ENCODE measurements at regions of chr6 and their contacts with region 1.

Region 1: DNA sequence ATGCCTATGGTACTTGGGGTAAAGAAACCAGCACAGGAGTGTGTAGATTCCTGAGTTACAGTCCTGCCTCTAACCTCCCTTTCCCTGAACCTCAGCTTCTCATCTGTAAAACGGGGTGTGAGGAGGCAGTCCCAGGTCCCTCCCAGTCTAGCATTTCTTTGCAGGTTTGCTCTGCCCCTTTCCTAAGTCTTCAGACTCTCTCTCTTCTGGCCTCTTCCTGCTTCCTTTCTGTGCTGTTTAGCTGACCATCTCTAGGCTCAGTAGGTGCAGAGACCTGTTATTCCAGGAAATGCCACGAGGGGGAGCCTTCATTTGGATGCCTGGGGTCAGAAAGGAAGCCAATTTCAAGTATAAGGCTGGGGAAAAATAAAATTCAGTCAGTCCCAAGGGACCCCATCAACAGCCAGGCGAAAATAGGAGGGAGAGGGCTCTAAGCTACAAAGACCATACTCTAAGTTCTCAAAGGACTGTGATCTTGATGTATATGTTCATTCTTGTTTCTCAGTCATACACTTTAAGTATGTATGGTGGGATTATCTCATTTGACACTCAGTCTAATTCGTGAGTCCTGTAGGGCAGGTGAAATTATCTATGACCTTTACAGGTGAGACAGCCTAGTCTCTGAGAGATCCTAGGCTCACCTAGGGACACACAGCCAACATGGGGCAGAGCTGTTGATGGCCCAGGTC is 89.1 kb downstream of the NCR2 start:
- DNase-seq: peak; percentile 94
- H3K4me3 Mint-ChIP-seq: no peak overlapping the region
- H3K27ac Mint-ChIP-seq: no peak overlapping the region
- H3K4me1 Mint-ChIP-seq: peaks cover 8% of the 10 kb centered on the region
- H3K27me3 Mint-ChIP-seq: peaks cover 28% of the 10 kb centered on the region

Region 2: DNA sequence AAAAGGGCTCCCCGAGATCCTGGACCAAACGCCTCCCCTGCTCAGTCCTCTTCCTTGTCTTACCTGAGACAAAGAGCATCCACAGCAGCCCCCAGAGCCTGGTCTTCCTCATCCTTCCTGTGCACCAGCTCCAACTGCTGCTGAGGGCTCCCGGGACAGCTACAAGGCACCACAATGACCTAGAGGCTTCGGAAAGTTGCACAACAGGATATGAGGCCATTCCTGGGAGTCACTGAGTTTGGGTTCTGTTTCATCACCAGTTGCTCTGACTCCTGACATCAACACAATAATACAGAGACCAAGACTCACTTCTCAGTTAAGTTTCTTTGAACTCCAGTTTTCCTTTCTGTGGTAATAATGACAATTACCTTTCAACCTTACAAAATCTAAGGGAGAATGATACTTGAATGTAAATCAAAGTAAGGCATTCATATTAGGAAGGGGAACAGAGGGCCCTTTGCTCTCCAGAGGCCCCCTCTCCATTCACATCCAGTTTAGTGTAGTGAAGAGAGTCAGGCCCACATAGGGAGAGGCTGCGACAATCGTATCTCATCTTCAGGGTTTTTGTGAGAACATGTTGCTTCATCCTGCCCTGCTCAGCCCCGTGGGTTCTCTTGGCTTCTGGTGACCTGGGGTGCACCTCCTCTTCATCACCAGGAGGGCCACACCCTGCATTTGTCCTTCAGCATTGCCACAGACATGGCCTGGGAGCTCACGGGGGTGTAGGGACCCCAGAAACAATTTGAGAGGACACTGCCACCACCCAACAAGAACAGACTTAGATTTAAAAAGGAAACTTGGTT is 137.8 kb before region 1 on chr6 and contains the start of gene TREM1:
- intact Hi-C with region 1: no loop called
- DNase-seq: no peak
- H3K4me3 Mint-ChIP-seq: no peak within 1 kb of the TSS
- H3K27ac Mint-ChIP-seq: no peak within 1 kb of the TSS
- H3K4me1 Mint-ChIP-seq: peaks cover 3% of the 10 kb centered on the region
- H3K27me3 Mint-ChIP-seq: peaks cover 5% of the 10 kb centered on the region
- total RNA-seq, gene TREM1: 0.43 TPM in 1 of 2 replicates, not detected in the other

Region 3: GRCh38 chr6:41352396-41352795 is 72.1 kb before region 1 on chr6:
- intact Hi-C with region 1: no loop called
- DNase-seq: no peak
- H3K4me3 Mint-ChIP-seq: no peak overlapping the region
- H3K27ac Mint-ChIP-seq: no peak overlapping the region
- H3K4me1 Mint-ChIP-seq: no peaks in the 10 kb centered on the region
- H3K27me3 Mint-ChIP-seq: peaks cover 34% of the 10 kb centered on the region

Region 4: GRCh38 chr6:41367700-41368099 is 56.8 kb before region 1 on chr6:
- intact Hi-C with region 1: loop called (anchors 5 kb)
- DNase-seq: no peak
- H3K4me3 Mint-ChIP-seq: no peak overlapping the region
- H3K27ac Mint-ChIP-seq: no peak overlapping the region
- H3K4me1 Mint-ChIP-seq: peaks cover 16% of the 10 kb centered on the region
- H3K27me3 Mint-ChIP-seq: peaks cover 72% of the 10 kb centered on the region

Region 5: DNA sequence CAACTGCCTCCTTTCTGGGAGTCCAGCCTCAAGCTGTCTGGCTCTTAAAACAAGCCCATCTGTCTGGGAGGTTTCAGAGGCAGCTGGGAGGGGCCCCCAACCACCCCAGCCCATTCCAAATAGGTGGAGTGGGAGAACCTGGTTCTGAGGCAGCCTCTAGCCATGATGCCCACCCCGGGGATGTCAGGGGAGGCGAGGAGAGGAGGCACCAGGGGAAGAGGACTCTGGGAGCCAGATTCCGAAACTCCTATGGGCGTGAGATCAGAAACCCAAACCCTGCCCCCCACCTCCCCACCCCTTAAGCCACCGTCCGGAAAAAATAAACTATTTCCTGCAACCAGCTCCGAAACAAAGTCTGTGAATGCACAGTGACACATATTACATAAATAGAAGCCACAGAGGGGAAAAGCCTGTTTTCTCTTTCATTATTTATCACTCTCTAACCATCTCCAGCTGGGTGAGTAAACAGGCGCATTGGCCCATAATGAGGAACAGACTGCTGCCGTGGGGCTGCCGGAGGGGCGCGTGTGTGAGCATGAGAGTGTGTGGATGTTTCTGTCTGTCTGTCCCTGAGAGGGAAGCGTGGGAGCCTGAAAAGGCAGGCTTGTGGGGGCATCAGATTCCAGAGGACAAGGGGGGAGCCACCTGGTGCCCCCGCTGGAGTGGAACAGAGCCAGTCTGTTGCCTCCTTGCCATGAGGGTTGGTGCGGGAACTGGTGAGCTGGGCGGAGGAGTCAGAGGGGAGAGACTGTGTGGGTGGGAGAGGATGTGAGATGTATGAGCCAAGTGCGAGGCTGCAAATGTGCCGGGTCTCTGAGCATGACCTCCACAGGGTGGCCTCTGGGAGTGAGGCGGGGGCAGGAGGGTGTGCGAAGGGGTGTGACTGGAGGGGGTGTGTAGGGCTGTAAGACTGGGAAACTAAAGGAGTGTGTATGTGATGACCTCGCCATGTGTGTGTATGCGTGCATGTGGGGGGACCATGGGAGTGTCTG is 107.4 kb after region 1 on chr6:
- intact Hi-C with region 1: loop called (anchors 1 kb)
- DNase-seq: peak; percentile 87
- H3K4me3 Mint-ChIP-seq: peak overlapping the region; percentile 86
- H3K27ac Mint-ChIP-seq: peak overlapping the region; percentile 96
- H3K4me1 Mint-ChIP-seq: peaks cover 23% of the 10 kb centered on the region
- H3K27me3 Mint-ChIP-seq: peaks cover 65% of the 10 kb centered on the region

Region 6: DNA sequence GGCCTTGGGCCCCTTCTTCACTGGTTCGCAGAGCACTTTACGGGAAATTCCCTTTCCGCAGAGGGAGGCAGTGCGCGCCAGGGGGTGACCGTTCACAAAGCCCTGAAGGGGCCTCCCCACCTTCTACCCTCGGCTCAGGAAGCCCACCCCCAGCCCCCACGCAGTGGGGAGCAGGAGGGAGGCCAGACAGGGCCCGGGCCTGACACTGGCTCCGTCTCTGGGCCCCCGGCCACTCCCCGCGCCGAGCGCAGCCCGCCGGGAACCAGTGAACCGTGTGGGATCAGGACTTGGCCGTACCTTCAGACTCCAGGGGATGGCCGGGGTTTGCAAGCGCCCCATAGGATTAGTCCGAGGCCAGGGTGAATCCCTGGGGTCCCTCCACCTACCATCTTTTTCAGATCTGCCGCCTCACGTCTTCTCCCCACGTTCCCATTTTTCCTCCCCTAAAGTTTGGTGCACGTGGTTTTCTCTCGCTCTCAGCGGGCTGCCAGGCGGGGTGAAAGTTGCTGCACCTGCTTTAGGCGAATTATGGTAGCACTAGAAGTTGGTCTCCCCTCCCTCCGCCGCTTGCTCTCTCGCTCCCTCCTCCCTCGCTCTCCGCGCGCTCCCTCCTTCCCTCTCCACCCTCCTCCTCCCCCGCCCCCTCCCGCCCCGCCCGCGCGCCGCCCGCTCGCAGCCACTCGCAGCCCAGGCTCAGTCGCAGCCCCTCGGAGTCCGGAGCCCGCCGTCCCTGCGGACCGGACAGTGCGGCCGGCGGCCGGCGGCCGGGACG is 121.4 kb after region 1 on chr6 and contains the start of gene FOXP4:
- intact Hi-C with region 1: loop called (anchors 5 kb)
- DNase-seq: peak; percentile 94
- H3K4me3 Mint-ChIP-seq: peak within 1 kb of the TSS; percentile 91
- H3K27ac Mint-ChIP-seq: peak within 1 kb of the TSS; percentile 79
- H3K4me1 Mint-ChIP-seq: peaks cover 20% of the 10 kb centered on the region
- H3K27me3 Mint-ChIP-seq: peaks cover 60% of the 10 kb centered on the region
- total RNA-seq, gene FOXP4: 16.9 and 17.6 TPM in 2 replicates

Region 7: GRCh38 chr6:41591859-41592502 is 167.5 kb after region 1 on chr6:
- intact Hi-C with region 1: loop called (anchors 1 kb)
- DNase-seq: peak; percentile 93
- H3K4me3 Mint-ChIP-seq: no peak overlapping the region
- H3K27ac Mint-ChIP-seq: no peak overlapping the region
- H3K4me1 Mint-ChIP-seq: peaks cover 2% of the 10 kb centered on the region
- H3K27me3 Mint-ChIP-seq: no peaks in the 10 kb centered on the region

Region 8: DNA sequence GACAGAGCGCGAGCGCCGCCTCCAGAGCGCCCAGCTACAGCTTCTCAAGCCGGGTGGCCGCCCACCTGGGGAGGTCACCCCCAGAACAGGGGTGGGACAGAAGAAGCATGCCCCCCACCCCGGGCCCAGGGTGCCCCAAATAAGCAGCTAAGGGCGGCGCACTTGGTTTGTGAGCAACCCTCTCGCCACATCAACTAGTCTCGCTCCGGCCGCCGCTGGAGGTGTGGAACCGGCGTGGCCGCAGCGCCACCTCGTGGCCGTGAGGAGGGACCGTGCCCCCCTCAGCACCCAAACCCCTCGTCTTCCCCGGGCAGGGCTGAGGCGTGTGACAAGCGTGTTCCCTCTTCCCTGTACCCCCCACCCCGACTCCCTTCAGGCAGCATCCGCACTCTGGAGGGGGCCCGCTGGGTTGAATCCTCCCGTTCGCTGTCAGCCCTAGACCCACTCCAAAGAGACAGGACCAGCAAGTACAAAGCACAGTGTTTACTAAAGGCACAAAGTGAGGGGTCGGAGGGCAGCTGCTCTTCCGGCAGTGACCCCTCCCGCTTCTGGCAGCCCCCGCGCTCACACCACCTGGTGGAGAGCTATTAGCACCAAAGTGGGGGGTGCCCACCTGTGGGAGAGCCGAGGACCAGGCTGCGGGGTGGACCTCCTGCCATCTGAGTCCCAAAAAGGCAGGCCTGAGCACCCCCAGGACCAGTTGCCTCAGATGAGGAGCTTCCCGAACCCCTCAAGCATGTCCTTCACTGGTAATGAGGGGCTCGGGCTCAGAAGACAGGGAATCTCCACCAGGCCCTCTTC is 259.2 kb after region 1 on chr6:
- intact Hi-C with region 1: loop called (anchors 2 kb)
- DNase-seq: peak; percentile 94
- H3K4me3 Mint-ChIP-seq: peak overlapping the region; percentile 83
- H3K27ac Mint-ChIP-seq: peak overlapping the region; percentile 82
- H3K4me1 Mint-ChIP-seq: peaks cover 6% of the 10 kb centered on the region
- H3K27me3 Mint-ChIP-seq: peaks cover 3% of the 10 kb centered on the region

Measured in activated CD4-positive, alpha-beta T cell treated with anti-CD3 and anti-CD28 coated beads, Interleukin-2, amount 10 ng/mL, durations not matched to agents 24 days and 14 days (primary cell).